GM10248 (cell line): ENCODE measurements at regions of chr22 and their contacts with region 1.

Region 1: DNA sequence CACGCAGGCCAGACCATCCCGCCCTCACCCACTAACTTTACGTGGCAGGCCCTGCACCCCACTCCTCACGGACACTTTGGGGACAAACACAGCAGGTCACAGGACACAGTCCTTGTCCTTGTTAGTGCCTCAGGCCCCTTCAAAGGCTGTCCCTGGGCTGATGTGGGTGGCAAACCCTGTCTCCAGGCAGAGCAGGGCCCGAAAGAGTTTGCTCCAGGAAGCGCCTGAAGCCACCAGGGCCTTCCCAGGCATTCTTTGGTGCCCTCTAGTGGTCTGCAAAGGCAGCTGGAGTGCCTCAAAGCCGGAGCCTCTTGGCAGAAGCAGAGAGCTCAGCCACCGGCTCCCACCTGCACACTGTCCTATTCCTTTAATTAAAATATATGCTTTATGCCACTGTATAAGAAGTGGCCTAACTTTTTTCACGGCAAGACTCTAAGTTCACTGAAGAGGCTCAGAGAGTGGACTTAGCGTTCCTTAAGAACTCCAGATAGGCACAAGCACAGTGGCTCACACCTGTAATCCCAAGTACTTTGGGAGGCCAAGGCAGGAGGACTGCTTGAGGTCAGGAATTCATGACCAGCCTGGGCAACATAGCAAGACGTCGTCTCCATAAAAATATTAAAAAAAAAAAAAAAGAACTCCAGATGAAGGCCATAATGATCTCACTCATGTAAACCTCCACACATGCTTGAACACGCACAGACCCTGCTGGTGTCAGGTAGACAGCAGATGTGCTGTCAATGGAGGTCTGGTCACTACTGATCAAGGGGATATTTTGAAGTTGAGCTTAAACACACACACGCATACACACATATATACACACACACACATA is 11.1 kb downstream of the TXN2 start:
- DNase-seq: peak; percentile 86
- CTCF ChIP-seq: peak; percentile 95

Region 2: GRCh38 chr22:35971456-35972119 is 498.8 kb before region 1 on chr22:
- CTCF ChIA-PET with region 1: no interaction called
- POLR2A ChIA-PET with region 1: no interaction called
- DNase-seq: no peak
- CTCF ChIP-seq: no peak

Region 3: DNA sequence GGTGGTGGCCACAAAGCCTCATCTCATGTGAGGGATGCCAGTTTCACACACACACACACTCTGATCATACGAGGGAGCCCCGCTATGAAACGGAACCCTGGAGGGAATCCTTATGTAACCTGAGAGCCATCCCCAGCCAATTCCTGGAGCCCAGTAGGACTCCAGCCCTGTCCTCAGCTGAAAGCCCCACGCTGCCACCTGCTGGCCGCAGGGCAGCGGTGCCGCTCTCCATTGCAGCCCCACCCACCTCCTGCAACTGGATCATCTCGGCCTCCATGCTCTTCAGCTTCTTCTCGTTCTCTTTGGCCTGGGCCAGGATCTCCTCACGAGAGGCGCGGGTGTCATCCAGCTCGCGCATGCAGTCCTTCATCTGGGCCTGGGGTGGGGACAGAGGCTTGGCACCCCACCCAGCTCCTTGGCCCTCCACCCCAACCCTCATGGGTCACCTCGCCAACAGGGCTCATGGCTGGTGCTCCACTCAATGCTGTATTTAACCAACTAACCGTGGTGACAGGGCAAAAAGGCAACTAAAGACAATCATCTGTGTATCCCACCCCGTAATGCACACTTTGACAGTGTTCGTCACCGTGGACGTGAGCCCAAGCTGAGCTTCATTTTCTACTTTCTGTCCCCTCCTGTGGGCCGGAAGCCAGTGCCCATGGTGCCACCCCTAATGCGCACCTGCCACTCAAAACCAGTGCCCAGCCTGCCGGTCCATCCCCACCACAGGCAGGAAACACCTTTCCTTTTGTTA is 183.7 kb before region 1 on chr22:
- CTCF ChIA-PET with region 1: interaction called, 24 read pairs
- POLR2A ChIA-PET with region 1: no interaction called
- DNase-seq: peak; percentile 82
- CTCF ChIP-seq: peak; percentile 92

Region 4: GRCh38 chr22:36311386-36312358 is 158.7 kb before region 1 on chr22:
- CTCF ChIA-PET with region 1: interaction called, 16 read pairs
- POLR2A ChIA-PET with region 1: no interaction called
- DNase-seq: no peak
- CTCF ChIP-seq: no peak

Region 5: DNA sequence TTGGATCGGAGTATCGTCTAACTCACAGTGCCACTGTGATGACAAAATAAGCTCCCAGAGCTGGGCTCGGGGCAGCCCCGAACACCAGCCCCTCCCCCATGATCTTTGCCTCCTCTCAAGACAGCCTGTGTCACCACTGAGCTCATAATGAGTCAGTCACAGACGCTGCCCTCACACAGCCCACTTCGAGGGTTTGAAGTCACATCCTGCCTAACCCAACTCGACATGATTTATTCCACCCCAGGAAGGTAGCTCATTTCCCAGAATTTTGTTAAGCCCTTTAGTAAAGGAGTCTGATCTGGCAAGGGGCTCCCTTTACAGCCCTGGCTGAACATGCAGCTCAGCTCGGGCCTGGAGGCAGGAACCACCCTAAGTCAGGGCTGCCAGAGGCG is 105.4 kb before region 1 on chr22:
- CTCF ChIA-PET with region 1: interaction called, 11 read pairs
- POLR2A ChIA-PET with region 1: interaction called, 3 read pairs
- DNase-seq: peak; percentile 77
- CTCF ChIP-seq: no peak

Region 6: GRCh38 chr22:36481393-36482168 is 11.2 kb after region 1 on chr22 and contains the start of gene TXN2:
- CTCF ChIA-PET with region 1: interaction called, 34 read pairs
- POLR2A ChIA-PET with region 1: no interaction called
- DNase-seq: peak; percentile 97
- CTCF ChIP-seq: no peak